ENCODE measurements at regions of chr17 and their contacts with region 1.

Region 1: GRCh38 chr17:45410144-45411091 is 22.3 kb downstream of the ARHGAP27 start:
- DNase-seq: peak; percentile 72
- ATAC-seq: peak; percentile 79
- H3K4me3 Mint-ChIP-seq: peak overlapping the region; percentile 99
- H3K27ac Mint-ChIP-seq: peak overlapping the region; percentile 98
- H3K4me1 Mint-ChIP-seq: peaks cover 48% of the 10 kb centered on the region
- H3K27me3 Mint-ChIP-seq: no peaks in the 10 kb centered on the region

Region 2: DNA sequence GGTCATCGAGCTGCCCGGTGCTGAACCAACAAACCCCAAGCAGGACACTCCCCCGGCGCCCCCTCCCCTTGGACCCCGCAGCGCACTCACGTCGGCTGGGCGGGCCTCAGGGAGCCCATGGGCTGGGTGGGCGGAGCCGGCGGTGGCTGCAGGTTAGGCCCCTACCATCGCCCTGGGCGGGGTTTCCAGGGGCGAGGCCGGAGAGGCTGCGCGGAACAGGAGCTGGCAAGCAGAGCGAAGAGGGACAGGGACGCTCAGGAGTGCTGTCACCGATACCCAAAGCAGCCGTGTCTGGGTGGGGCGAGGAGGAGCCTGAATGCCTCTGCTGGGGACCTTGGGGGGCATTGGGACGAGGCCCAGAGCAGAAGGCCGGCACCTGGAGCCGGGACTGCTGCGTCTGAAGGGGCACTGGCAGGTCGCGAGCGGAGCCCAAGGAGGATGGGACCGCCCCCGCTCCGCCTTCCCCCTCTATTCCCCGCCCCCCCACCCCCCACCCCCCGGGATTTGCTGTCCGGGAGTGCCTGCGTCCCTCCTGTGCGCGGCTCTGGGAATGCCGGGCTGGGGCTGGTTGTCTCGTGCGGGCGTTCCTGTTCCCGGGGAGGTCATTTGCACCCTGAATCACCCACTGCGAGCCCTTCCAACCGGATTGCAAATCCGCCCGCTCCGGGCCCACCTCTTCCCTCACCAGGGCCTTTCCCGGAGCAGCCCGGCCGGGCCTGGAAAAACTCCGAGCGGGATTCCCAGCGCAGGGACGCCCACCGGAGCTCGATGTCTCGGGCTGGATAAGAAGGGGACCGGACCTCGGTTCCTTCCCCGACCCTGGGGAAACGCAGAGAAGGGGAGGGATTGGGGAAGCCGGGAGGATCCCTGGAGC is 21.4 kb after region 1 on chr17:
- POLR2A ChIA-PET with region 1: interaction called, 10 read pairs
- DNase-seq: peak; percentile 94
- ATAC-seq: peak; percentile 80
- H3K4me3 Mint-ChIP-seq: peak overlapping the region; percentile 92
- H3K27ac Mint-ChIP-seq: peak overlapping the region; percentile 90
- H3K4me1 Mint-ChIP-seq: peaks cover 18% of the 10 kb centered on the region
- H3K27me3 Mint-ChIP-seq: no peaks in the 10 kb centered on the region